HCT116 (cell line): ENCODE measurements at regions of chr6 and their contacts with region 1.

Region 1: GRCh38 chr6:12890171-12890790 is 173.7 kb downstream of the PHACTR1 start:
- DNase-seq: peak; percentile 19
- ATAC-seq: peak; percentile 78
- H3K4me3 ChIP-seq: no peak overlapping the region
- H3K27ac ChIP-seq: no peak overlapping the region
- H3K4me1 ChIP-seq: no peaks in the 10 kb centered on the region
- H3K27me3 ChIP-seq: peaks cover 12% of the 10 kb centered on the region; the same call in 1 of the 2 replicates
- CTCF ChIP-seq: peak; percentile 24 to 87 (median 73); a peak in 5 of 6 replicates
- POLR2A ChIP-seq: no peak
- RAD21 ChIP-seq: peak; percentile 21; the same call in 1 of the 2 replicates

Region 2: DNA sequence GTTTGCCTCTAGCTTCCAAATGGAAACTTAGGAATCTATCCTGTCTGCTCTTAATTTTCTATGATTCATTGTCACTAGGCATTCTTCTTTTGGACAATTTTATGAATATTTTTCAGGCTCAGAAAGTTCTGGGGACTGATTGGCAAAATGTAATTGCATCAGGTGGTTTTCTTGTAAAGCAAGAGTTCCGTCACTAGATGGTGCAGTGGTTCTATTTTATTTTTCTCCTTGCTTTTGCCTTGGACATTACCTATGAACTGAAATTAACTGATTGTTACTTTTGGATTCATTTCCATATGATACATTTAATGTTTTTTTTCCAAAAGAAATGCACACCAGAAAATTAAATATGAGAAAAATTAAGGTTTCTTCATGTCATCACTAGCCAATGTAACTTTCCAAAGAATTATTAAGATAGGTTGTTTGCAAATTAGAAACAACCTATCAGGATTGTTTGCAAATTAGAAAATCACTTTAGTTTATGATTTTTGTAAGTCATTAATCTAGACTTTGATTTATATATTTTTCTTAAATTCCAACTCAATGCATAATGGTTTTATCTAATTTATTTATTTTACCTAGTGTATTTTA is 1304.8 kb before region 1 on chr6:
- CTCF ChIA-PET with region 1: no interaction called
- POLR2A ChIA-PET with region 1: no interaction called
- RAD21 ChIA-PET with region 1: no interaction called
- intact Hi-C with region 1: loop called (anchors 5 kb)
- DNase-seq: peak; percentile 44
- ATAC-seq: peak; percentile 63; the same call in 1 of the 2 replicates
- H3K4me3 ChIP-seq: no peak overlapping the region
- H3K27ac ChIP-seq: no peak overlapping the region
- H3K4me1 ChIP-seq: no peaks in the 10 kb centered on the region
- H3K27me3 ChIP-seq: no peaks in the 10 kb centered on the region
- CTCF ChIP-seq: peak; percentile 48 to 76 (median 71)
- POLR2A ChIP-seq: no peak
- RAD21 ChIP-seq: peak; percentile 75

Region 3: GRCh38 chr6:12637960-12638641 is 252.2 kb before region 1 on chr6:
- CTCF ChIA-PET with region 1: interaction called, 27 read pairs
- POLR2A ChIA-PET with region 1: no interaction called
- RAD21 ChIA-PET with region 1: interaction called in 1 of 2 experiments, 5 read pairs
- intact Hi-C with region 1: loop called (anchors 1 kb)
- DNase-seq: peak; percentile 69
- ATAC-seq: peak; percentile 99
- H3K4me3 ChIP-seq: no peak overlapping the region
- H3K27ac ChIP-seq: no peak overlapping the region
- H3K4me1 ChIP-seq: 0 out of 4 replicates have a peak, but pooled peaks cover 0 to 6% of the 10 kb centered on the region in 2 experiments
- H3K27me3 ChIP-seq: no peaks in the 10 kb centered on the region
- CTCF ChIP-seq: peak; percentile 66 to 89 (median 77)
- POLR2A ChIP-seq: no peak
- RAD21 ChIP-seq: peak; percentile 82

Region 4: GRCh38 chr6:13141387-13141786 is 251.1 kb after region 1 on chr6:
- CTCF ChIA-PET with region 1: no interaction called
- POLR2A ChIA-PET with region 1: no interaction called
- RAD21 ChIA-PET with region 1: no interaction called
- intact Hi-C with region 1: no loop called
- DNase-seq: no peak
- ATAC-seq: no peak
- H3K4me3 ChIP-seq: no peak overlapping the region
- H3K27ac ChIP-seq: no peak overlapping the region
- H3K4me1 ChIP-seq: no peaks in the 10 kb centered on the region
- H3K27me3 ChIP-seq: peaks cover 43% of the 10 kb centered on the region; the same call in 1 of the 2 replicates
- CTCF ChIP-seq: no peak
- POLR2A ChIP-seq: no peak
- RAD21 ChIP-seq: no peak